IMR-90 (cell line): ENCODE measurements at regions of chr11 and their contacts with region 1.

Region 1: GRCh38 chr11:72030472-72031045 is 31.9 kb downstream of the IL18BP start:
- DNase-seq: no peak
- ATAC-seq: no peak
- H3K4me3 ChIP-seq: no peak overlapping the region
- H3K27ac ChIP-seq: no peak overlapping the region
- H3K4me1 ChIP-seq: peaks cover 5% of the 10 kb centered on the region
- H3K27me3 ChIP-seq: no peaks in the 10 kb centered on the region
- CTCF ChIP-seq: no peak
- POLR2A ChIP-seq: no peak
- RAD21 ChIP-seq: no peak

Region 2: DNA sequence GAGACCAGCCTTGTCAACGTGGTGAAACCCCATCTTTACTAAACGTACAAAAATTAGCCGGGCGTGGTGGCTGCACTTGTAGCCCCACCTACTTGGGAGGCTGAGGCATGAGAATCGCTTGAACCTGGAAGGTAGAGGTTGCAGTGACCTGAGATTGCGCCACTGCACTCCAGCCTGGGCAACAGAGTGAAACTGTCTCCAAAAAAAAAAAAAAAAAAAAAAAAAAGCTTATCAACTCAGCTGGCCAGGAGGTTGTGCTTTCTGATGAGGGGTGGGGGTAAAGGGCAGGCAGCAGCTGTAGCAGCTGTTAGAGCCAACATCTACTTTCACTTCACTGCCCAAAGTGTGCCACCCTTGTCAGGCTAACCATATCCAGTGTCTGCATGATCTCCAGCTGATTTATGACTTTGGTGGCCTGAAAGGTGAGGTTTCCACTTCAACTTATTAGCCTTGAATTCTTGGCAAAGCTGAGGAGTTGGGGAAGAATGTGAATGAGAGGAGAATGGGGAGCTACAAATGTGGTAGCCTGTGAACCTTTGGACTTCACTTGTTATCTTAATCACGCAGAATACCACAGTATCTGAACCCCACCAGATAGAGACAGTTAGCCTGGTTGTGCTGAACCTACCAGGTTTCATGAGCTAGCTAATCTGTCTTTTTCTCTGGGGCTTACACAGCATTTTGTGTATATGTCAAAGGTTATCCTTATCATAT is 82.1 kb before region 1 on chr11:
- CTCF ChIA-PET with region 1: no interaction called
- POLR2A ChIA-PET with region 1: no interaction called
- dilution Hi-C with region 1: no loop called
- in situ Hi-C with region 1: no loop called
- intact Hi-C with region 1: no loop called
- DNase-seq: no peak
- ATAC-seq: no peak
- H3K4me3 ChIP-seq: no peak overlapping the region
- H3K27ac ChIP-seq: no peak overlapping the region
- H3K4me1 ChIP-seq: peaks cover 11% of the 10 kb centered on the region
- H3K27me3 ChIP-seq: no peaks in the 10 kb centered on the region
- CTCF ChIP-seq: no peak
- POLR2A ChIP-seq: no peak
- RAD21 ChIP-seq: no peak

Region 3: DNA sequence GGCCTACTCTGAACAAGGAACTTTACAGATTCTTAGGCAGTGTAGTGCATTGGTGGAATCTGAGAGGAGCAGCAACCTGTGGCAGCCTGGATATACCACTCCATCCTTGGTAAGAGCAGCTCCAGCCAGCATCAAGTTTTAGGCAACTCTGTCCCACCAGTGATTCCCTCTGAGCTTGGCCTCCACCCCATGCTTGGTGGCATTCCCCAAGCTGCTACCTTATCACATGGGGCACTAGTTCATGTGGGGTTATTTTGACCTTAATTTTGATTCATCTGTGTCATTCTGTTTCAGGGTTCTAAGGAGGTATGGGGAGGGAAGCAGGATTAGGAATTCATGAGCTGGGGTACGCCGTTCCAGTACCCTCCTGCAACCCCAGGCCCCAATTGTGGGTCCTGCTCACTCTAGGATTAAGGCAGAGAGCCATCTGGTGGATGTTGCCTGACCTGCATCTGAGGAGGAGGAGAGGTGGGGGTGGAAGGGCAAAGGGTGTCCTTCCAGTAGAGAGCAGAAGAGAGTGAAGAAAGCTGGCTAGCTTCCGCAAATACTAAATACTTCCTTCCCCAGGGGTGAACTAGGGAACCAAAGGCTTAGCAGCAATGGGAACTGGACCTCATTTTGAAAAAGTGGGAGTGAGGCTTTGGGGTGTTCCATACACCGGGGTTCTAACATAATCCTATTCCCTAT is 60.6 kb after region 1 on chr11:
- CTCF ChIA-PET with region 1: interaction called, 37 read pairs
- POLR2A ChIA-PET with region 1: no interaction called
- dilution Hi-C with region 1: no loop called
- in situ Hi-C with region 1: loop called (anchors 10 kb)
- intact Hi-C with region 1: loop called (anchors 1 kb)
- DNase-seq: peak; percentile 54
- ATAC-seq: peak; percentile 95
- H3K4me3 ChIP-seq: no peak overlapping the region
- H3K27ac ChIP-seq: no peak overlapping the region
- H3K4me1 ChIP-seq: no peaks in the 10 kb centered on the region
- H3K27me3 ChIP-seq: no peaks in the 10 kb centered on the region
- CTCF ChIP-seq: peak; percentile 91
- POLR2A ChIP-seq: no peak
- RAD21 ChIP-seq: peak; percentile 79

Region 4: DNA sequence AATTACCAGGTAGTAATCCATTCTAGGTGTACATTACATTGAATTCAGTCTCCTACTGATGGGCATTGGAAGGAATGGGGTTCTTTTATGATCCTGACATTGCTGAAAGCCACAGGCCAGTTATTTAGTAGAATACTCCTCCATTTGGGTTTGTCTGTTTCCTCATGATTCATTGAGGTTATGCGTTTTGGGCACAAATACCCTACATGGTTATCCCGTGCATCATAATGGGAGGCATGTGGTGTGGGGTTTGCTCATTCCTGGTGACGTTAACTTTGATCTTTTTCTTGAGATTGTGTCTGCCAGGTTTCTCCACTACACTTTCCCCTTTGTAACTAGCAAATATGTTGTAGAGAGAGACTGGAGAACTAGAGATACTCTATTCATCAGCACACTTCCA is 110.5 kb after region 1 on chr11:
- CTCF ChIA-PET with region 1: interaction called, 21 read pairs
- POLR2A ChIA-PET with region 1: no interaction called
- dilution Hi-C with region 1: no loop called
- in situ Hi-C with region 1: no loop called
- intact Hi-C with region 1: loop called (anchors 1 kb)
- DNase-seq: peak; percentile 90
- ATAC-seq: peak; percentile 52
- H3K4me3 ChIP-seq: no peak overlapping the region
- H3K27ac ChIP-seq: peak overlapping the region; percentile 68
- H3K4me1 ChIP-seq: peaks cover 15% of the 10 kb centered on the region
- H3K27me3 ChIP-seq: no peaks in the 10 kb centered on the region
- CTCF ChIP-seq: no peak
- POLR2A ChIP-seq: no peak
- RAD21 ChIP-seq: no peak

Region 5: DNA sequence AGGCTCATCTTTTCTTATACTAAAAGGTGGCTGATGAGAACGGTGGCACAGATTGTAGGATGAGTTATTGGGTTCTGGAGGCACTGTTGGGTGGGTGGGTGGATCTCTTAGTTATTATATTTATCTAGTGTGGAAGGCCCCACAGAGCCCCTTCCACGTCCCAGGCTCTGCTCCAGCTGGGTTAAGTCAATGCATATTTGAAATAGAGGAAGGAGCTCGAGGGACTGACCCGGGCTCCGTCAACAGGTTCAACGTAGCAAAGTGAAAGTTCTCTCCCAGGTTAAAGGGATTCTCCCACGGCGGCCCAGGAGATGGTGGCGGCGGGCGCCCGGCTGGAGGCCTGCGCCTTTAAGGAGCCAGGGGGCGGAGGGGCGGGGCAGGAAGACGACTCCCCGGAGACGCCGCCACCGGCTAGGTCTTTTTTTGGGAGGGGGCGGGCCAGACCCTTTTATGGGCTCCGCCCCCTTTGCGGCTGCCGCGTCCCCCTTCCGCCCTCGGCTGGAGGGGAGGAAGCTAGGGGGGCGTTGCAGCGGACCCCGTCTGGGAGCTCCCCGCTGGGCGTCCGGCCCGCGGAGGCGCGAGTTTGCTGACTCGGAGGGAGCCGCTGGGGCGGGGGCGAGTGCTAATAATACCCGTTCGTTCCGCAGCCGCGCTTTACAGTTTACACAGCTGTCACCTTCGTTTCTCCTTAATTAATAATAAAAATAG is 192.5 kb after region 1 on chr11:
- CTCF ChIA-PET with region 1: interaction called, 3 read pairs
- POLR2A ChIA-PET with region 1: no interaction called
- dilution Hi-C with region 1: no loop called
- in situ Hi-C with region 1: no loop called
- intact Hi-C with region 1: loop called (anchors 1 kb)
- DNase-seq: peak; percentile 88
- ATAC-seq: peak; percentile 76
- H3K4me3 ChIP-seq: peak overlapping the region; percentile 98
- H3K27ac ChIP-seq: peak overlapping the region; percentile 80
- H3K4me1 ChIP-seq: peaks cover 6% of the 10 kb centered on the region; the same call in 1 of the 2 replicates
- H3K27me3 ChIP-seq: peaks cover 11% of the 10 kb centered on the region
- CTCF ChIP-seq: peak; percentile 39; the same call in 1 of the 2 replicates
- POLR2A ChIP-seq: no peak; the same call in 1 of the 2 replicates
- RAD21 ChIP-seq: no peak

Region 6: DNA sequence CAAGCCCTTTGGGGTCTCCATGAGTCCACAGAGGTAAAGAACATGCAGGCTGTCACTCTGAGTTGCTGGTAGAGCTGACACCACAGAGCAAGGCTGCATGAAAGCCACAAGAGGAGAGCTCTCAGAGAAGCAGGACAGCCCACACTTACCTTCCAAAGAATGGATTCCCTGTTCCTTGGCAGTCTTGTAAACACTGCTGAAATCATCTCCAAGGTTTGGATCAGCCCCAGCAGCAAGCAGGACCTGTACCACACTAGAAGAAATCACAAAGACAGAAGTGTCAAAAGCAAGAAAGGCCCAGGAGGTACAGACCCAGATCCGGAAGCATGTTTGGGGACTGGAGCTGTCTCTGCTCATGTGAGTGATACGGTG is 349.6 kb after region 1 on chr11:
- CTCF ChIA-PET with region 1: no interaction called
- POLR2A ChIA-PET with region 1: no interaction called
- dilution Hi-C with region 1: no loop called
- in situ Hi-C with region 1: no loop called
- intact Hi-C with region 1: no loop called
- DNase-seq: peak; percentile 12
- ATAC-seq: no peak
- H3K4me3 ChIP-seq: no peak overlapping the region
- H3K27ac ChIP-seq: no peak overlapping the region
- H3K4me1 ChIP-seq: peaks cover 3% of the 10 kb centered on the region; the same call in 1 of the 2 replicates
- H3K27me3 ChIP-seq: no peaks in the 10 kb centered on the region
- CTCF ChIP-seq: no peak
- POLR2A ChIP-seq: no peak
- RAD21 ChIP-seq: no peak

Region 7: DNA sequence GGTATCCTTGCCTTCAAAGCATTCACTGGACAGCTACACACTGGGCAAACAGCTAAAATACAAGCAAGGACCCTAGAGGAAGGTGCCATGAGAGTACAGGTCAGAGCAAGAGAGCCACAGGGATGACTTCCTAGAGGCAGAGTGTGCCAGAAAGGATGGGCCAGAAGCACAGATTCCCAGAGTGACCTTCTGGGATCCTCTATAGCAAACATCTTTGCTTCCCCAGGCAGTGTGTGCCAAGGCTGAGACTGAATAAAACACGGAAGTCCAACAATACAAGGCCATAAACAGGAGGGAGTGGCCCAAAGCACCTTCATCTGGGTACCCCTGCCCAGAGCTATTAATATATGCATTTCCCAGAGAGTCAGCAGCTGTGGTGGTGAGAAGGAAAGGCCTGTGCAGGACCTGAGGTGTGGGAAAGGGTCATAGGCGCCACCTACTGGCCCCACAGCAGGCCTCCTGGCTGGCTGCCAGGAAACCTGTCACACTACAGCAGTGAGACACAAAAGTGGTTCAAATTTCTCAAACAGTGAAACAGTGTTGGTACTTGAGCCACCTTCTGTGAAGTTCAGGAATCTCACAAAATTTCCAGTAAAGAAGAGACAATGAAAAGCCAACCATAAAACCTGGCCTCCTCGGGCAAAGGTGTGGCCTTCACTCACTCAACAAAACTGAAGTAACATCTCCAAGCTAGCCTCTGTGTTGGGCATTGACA is 383.5 kb after region 1 on chr11:
- CTCF ChIA-PET with region 1: interaction called, 4 read pairs
- POLR2A ChIA-PET with region 1: no interaction called
- dilution Hi-C with region 1: no loop called
- in situ Hi-C with region 1: no loop called
- intact Hi-C with region 1: loop called (anchors 1 kb)
- DNase-seq: peak; percentile 76
- ATAC-seq: peak; percentile 90
- H3K4me3 ChIP-seq: no peak overlapping the region
- H3K27ac ChIP-seq: no peak overlapping the region
- H3K4me1 ChIP-seq: peaks cover 4% of the 10 kb centered on the region; the same call in 1 of the 2 replicates
- H3K27me3 ChIP-seq: no peaks in the 10 kb centered on the region
- CTCF ChIP-seq: peak; percentile 87
- POLR2A ChIP-seq: no peak
- RAD21 ChIP-seq: peak; percentile 84